ENCODE measurements at regions of chr21 and their contacts with region 1.

Region 1: GRCh38 chr21:45287438-45288391 is at the start of gene POFUT2:
- DNase-seq: peak; percentile 99
- ATAC-seq: peak; percentile 85
- H3K4me3 Mint-ChIP-seq: peak within 1 kb of the TSS; percentile 88
- H3K27ac Mint-ChIP-seq: peak within 1 kb of the TSS; percentile 87
- H3K4me1 Mint-ChIP-seq: peaks cover 19% of the 10 kb centered on the region
- H3K27me3 Mint-ChIP-seq: no peaks in the 10 kb centered on the region
- CTCF ChIP-seq: no peak
- total RNA-seq, gene POFUT2: 19.3 and 21.4 TPM in 2 replicates

Region 2: DNA sequence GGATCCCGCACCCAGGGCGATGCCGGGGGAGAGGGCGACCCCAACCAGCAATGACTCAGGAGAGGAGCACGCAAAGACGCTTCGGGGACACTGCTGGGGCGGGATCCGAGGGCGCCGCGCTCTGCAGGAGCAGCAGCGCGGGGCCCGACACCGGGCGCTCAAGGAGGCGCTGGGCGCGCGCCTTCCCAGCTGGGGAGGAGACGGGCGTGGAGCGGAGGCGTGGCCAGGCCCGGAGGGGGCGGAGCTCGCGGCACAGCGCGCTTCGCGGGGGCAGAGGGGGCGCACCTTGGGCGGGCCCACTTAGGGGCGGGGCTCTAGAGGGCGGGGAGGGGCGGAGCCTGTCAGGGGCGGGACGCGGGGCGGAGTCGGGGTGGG is 470.2 kb before region 1 on chr21:
- CTCF ChIA-PET with region 1: no interaction called
- POLR2A ChIA-PET with region 1: interaction called, 9 read pairs
- intact Hi-C with region 1: loop called (anchors 5 kb)
- DNase-seq: peak; percentile 89
- ATAC-seq: peak; percentile 93
- H3K4me3 Mint-ChIP-seq: peak overlapping the region; percentile 53
- H3K27ac Mint-ChIP-seq: no peak overlapping the region
- H3K4me1 Mint-ChIP-seq: peaks cover 12% of the 10 kb centered on the region
- H3K27me3 Mint-ChIP-seq: no peaks in the 10 kb centered on the region
- CTCF ChIP-seq: no peak

Region 3: GRCh38 chr21:45152265-45152746 is 135.4 kb before region 1 on chr21:
- CTCF ChIA-PET with region 1: interaction called, 5 read pairs
- POLR2A ChIA-PET with region 1: interaction called, 3 read pairs
- intact Hi-C with region 1: loop called (anchors 1 kb)
- DNase-seq: peak; percentile 51
- ATAC-seq: peak; percentile 98
- H3K4me3 Mint-ChIP-seq: peak overlapping the region; percentile 68
- H3K27ac Mint-ChIP-seq: peak overlapping the region; percentile 26
- H3K4me1 Mint-ChIP-seq: peaks cover 44% of the 10 kb centered on the region
- H3K27me3 Mint-ChIP-seq: no peaks in the 10 kb centered on the region
- CTCF ChIP-seq: no peak

Region 4: GRCh38 chr21:45439161-45439872 is 151.6 kb after region 1 on chr21:
- CTCF ChIA-PET with region 1: interaction called, 4 read pairs
- POLR2A ChIA-PET with region 1: no interaction called
- intact Hi-C with region 1: loop called (anchors 1 kb)
- DNase-seq: peak; percentile 81
- ATAC-seq: peak; percentile 83
- H3K4me3 Mint-ChIP-seq: peak overlapping the region; percentile 66
- H3K27ac Mint-ChIP-seq: no peak overlapping the region
- H3K4me1 Mint-ChIP-seq: peaks cover 4% of the 10 kb centered on the region
- H3K27me3 Mint-ChIP-seq: peaks cover 15% of the 10 kb centered on the region
- CTCF ChIP-seq: no peak

Region 5: DNA sequence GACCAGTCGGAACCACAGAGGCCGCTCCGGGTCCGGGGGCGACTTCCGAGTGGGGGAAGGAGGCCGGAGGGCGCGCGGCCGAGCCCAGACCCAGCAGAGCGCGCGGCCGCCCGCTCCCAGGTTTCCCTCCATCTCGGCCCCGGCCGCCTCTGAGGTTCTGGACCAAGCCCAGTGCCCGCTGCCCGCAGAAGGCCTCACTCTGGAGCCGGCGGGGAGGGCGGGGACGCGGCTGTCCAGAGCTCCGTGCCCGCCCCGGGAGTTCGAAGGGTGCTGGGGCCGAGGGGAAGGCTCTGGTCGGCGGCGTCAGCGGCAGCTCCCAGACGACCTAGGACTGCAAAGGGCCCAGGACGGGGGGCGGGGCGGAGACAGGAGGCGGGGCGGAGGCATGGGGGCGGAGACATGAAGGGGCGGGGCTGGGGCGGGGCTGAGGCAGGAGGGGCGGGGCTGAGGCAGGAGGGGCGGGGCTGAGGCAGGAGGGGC is 302.6 kb after region 1 on chr21:
- CTCF ChIA-PET with region 1: interaction called, 11 read pairs
- POLR2A ChIA-PET with region 1: no interaction called
- intact Hi-C with region 1: loop called (anchors 1 kb)
- DNase-seq: peak; percentile 43
- ATAC-seq: peak; percentile 70
- H3K4me3 Mint-ChIP-seq: no peak overlapping the region
- H3K27ac Mint-ChIP-seq: no peak overlapping the region
- H3K4me1 Mint-ChIP-seq: peaks cover 3% of the 10 kb centered on the region
- H3K27me3 Mint-ChIP-seq: peaks cover 30% of the 10 kb centered on the region
- CTCF ChIP-seq: no peak

Region 6: GRCh38 chr21:45643021-45643980 is 355.6 kb after region 1 on chr21 and contains the start of gene PCBP3:
- CTCF ChIA-PET with region 1: no interaction called
- POLR2A ChIA-PET with region 1: no interaction called
- intact Hi-C with region 1: loop called (anchors 5 kb)
- DNase-seq: peak; percentile 75
- ATAC-seq: peak; percentile 79
- H3K4me3 Mint-ChIP-seq: peak within 1 kb of the TSS; percentile 67
- H3K27ac Mint-ChIP-seq: no peak within 1 kb of the TSS
- H3K4me1 Mint-ChIP-seq: peaks cover 40% of the 10 kb centered on the region
- H3K27me3 Mint-ChIP-seq: peaks cover 32% of the 10 kb centered on the region
- CTCF ChIP-seq: no peak
- total RNA-seq, gene PCBP3: not detected in 2 replicates

Measured in activated B cell treated with CpG ODN at 0.5 μM for 24 hours (primary cell).